Activated T-helper 2 cell treated with anti-CD3 and anti-CD28 coated beads, Interferon-gamma antibody, Interleukin-2, Interleukin-4, amounts not matched to agents 10 μg/mL and 5 μg/mL and 100 μg/mL, durations not matched to agents 14 hours and 24 hours and 36 hours (primary cell): ENCODE measurements at regions of chr3 and their contacts with region 1.

Region 1: DNA sequence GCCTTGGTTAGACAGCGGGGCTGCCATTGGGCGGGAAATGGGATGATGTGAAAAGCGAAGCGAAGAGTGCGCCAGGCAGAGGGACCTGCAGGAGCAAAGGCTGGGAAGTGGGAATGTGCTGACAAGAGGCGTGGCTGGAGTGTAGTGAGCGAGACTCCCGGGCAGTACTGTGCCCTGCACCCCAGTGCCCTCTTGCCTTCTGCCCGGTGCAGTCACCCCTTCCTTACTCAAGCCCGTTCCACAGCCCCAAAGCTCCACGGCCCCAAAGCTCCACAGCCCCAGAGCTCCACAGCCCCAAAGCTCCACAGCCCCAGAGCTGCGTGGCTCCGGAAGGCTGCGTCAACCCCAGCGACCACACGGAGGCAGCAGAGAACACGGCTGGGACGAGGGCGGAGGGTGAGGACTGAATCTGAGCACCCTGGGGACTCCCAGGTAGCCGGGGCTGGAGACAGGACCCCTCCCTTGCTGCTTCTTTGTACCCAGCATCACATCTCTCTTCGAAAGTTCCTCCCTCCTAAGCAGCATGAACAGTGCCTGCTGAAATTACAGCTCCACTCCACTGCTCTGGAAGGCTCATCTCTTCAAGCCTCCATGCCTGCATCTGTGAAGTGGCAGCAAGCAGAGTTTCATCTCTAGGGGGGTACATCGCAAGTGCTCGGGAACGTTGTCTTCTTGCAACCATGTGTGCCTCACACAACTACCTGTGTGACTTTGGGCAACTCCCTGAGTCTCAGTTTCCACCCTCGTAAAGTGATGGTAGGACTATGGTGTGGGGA is 108.9 kb downstream of the FBLN2 start:
- DNase-seq: peak; percentile 43
- H3K4me3 Mint-ChIP-seq: no peak overlapping the region
- H3K27ac Mint-ChIP-seq: no peak overlapping the region
- H3K4me1 Mint-ChIP-seq: no peaks in the 10 kb centered on the region
- H3K27me3 Mint-ChIP-seq: peaks cover 23% of the 10 kb centered on the region

Region 2: DNA sequence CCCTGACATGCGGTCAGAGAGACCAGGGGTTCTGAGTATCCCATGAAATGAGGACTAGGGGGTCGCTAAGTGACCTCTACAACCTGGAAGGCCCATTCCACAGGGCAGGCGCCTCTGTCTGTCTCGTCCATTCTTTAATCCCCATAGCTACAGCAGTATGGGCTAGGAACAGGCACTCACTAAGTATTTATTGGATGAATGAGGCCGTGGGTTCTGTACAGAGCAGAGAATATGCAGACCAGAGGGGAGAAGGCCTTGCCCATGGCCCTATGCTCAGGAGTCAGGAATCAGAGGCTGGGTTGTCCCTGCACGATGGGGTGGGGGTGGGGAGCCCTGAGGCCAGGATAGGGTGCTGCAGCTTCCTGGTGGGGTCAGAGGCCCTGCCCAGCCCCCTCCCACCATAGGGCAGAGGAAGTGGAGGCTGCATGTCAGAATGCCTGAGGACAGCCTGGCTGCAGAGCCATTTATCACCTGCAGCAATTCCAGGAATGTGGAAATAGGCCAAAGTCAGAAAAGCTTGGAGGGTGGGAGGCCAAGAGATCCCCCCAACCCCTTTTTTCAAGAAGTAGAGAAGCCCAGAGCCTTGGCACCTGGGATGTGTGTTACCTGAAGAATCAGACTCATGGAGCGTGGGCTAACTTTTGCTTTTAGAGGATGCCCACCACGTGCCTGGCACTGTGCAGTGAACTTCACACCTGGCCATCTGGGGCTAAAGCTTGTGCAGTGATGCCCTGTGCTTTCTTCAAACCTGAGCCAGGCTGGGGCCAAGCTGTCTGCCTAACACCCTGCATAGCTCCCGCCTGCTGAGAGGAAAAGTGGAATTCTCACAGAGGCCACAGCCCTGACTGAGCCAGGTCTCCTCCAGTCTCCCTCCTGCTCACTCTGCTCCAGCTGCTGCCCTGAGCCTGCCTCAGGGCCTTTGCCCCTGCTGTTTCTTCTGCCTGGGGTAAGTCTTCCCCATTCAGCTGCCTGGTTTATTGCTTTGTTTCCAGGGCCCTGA is 112.6 kb after region 1 on chr3:
- intact Hi-C with region 1: no loop called
- DNase-seq: no peak
- H3K4me3 Mint-ChIP-seq: no peak overlapping the region
- H3K27ac Mint-ChIP-seq: no peak overlapping the region
- H3K4me1 Mint-ChIP-seq: peaks cover 1% of the 10 kb centered on the region
- H3K27me3 Mint-ChIP-seq: no peaks in the 10 kb centered on the region

Region 3: GRCh38 chr3:13884851-13885703 is 227.2 kb after region 1 on chr3:
- intact Hi-C with region 1: loop called (anchors 1 kb)
- DNase-seq: peak; percentile 41
- H3K4me3 Mint-ChIP-seq: no peak overlapping the region
- H3K27ac Mint-ChIP-seq: no peak overlapping the region
- H3K4me1 Mint-ChIP-seq: no peaks in the 10 kb centered on the region
- H3K27me3 Mint-ChIP-seq: peaks cover 37% of the 10 kb centered on the region